Activated B cell treated with CpG ODN at 0.5 μM for 24 hours (primary cell): ENCODE measurements at regions of chr1 and their contacts with region 1.

Region 1: GRCh38 chr1:172818841-172819527 is 160.1 kb downstream of the FASLG start:
- DNase-seq: peak; percentile 45
- ATAC-seq: peak; percentile 84
- H3K4me3 Mint-ChIP-seq: peak overlapping the region; percentile 77
- H3K27ac Mint-ChIP-seq: peak overlapping the region; percentile 96
- H3K4me1 Mint-ChIP-seq: peaks cover 47% of the 10 kb centered on the region
- H3K27me3 Mint-ChIP-seq: no peaks in the 10 kb centered on the region
- CTCF ChIP-seq: no peak

Region 2: GRCh38 chr1:171781176-171781875 is 1037.7 kb before region 1 on chr1 and contains the start of gene METTL13:
- CTCF ChIA-PET with region 1: no interaction called
- POLR2A ChIA-PET with region 1: no interaction called
- intact Hi-C with region 1: loop called (anchors 5 kb)
- DNase-seq: peak; percentile 91
- ATAC-seq: peak; percentile 94
- H3K4me3 Mint-ChIP-seq: peak within 1 kb of the TSS; percentile 99
- H3K27ac Mint-ChIP-seq: peak within 1 kb of the TSS; percentile 94
- H3K4me1 Mint-ChIP-seq: peaks cover 43% of the 10 kb centered on the region
- H3K27me3 Mint-ChIP-seq: peaks cover 6% of the 10 kb centered on the region
- CTCF ChIP-seq: no peak
- total RNA-seq, gene METTL13: 33.6 and 35.7 TPM in 2 replicates

Region 3: GRCh38 chr1:172745014-172745413 is 74.0 kb before region 1 on chr1:
- CTCF ChIA-PET with region 1: interaction called, 33 read pairs
- POLR2A ChIA-PET with region 1: interaction called, 35 read pairs
- intact Hi-C with region 1: loop called (anchors 1 kb)
- DNase-seq: no peak
- ATAC-seq: peak; percentile 86
- H3K4me3 Mint-ChIP-seq: no peak overlapping the region
- H3K27ac Mint-ChIP-seq: peak overlapping the region; percentile 43
- H3K4me1 Mint-ChIP-seq: peaks cover 34% of the 10 kb centered on the region
- H3K27me3 Mint-ChIP-seq: peaks cover 4% of the 10 kb centered on the region
- CTCF ChIP-seq: peak; percentile 42

Region 4: DNA sequence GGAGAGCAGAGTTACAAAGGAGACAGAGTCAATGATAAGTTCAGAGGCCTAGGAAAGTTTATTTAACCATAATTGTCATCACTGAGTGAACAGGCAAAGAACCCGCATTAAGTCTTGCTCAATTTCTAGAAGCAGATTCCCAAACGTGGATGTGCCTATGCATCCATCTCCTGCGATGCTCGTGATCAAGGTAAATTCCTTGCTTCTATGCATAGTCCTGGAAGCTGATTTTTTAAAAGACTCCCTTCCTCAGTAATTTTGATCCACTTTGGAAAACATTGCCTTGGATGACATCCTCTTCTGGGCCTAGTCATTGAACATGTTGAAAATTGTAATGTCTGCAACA is 115.4 kb after region 1 on chr1:
- CTCF ChIA-PET with region 1: no interaction called
- POLR2A ChIA-PET with region 1: no interaction called
- intact Hi-C with region 1: loop called (anchors 1 kb)
- DNase-seq: no peak
- ATAC-seq: no peak
- H3K4me3 Mint-ChIP-seq: no peak overlapping the region
- H3K27ac Mint-ChIP-seq: no peak overlapping the region
- H3K4me1 Mint-ChIP-seq: peaks cover 20% of the 10 kb centered on the region
- H3K27me3 Mint-ChIP-seq: no peaks in the 10 kb centered on the region
- CTCF ChIP-seq: no peak

Region 5: DNA sequence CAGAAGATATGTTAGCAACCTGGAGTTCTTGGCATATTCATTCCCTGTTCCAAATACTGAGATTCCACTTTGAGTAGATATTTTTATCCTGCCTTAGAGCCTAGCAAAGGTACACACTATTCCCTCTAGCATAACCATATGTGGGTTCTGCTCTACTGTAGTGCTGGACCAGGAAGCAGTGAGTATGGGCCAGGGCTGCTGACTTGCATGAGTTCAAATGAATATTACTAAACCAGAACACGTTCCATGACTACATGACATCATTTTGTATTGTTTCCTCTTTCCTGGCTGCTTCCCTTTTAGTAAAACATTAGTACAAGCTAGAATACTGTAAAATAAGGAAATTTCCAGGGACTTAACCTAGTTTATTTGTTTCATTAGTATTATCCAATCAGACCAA is 190.6 kb after region 1 on chr1:
- CTCF ChIA-PET with region 1: no interaction called
- POLR2A ChIA-PET with region 1: no interaction called
- intact Hi-C with region 1: no loop called
- DNase-seq: no peak
- ATAC-seq: no peak
- H3K4me3 Mint-ChIP-seq: no peak overlapping the region
- H3K27ac Mint-ChIP-seq: no peak overlapping the region
- H3K4me1 Mint-ChIP-seq: no peaks in the 10 kb centered on the region
- H3K27me3 Mint-ChIP-seq: no peaks in the 10 kb centered on the region
- CTCF ChIP-seq: no peak

Region 6: GRCh38 chr1:173202430-173203145 is 383.6 kb after region 1 on chr1:
- CTCF ChIA-PET with region 1: interaction called, 20 read pairs
- POLR2A ChIA-PET with region 1: interaction called, 8 read pairs
- intact Hi-C with region 1: loop called (anchors 2 kb)
- DNase-seq: no peak
- ATAC-seq: no peak
- H3K4me3 Mint-ChIP-seq: no peak overlapping the region
- H3K27ac Mint-ChIP-seq: no peak overlapping the region
- H3K4me1 Mint-ChIP-seq: peaks cover 50% of the 10 kb centered on the region
- H3K27me3 Mint-ChIP-seq: no peaks in the 10 kb centered on the region
- CTCF ChIP-seq: no peak

Region 7: DNA sequence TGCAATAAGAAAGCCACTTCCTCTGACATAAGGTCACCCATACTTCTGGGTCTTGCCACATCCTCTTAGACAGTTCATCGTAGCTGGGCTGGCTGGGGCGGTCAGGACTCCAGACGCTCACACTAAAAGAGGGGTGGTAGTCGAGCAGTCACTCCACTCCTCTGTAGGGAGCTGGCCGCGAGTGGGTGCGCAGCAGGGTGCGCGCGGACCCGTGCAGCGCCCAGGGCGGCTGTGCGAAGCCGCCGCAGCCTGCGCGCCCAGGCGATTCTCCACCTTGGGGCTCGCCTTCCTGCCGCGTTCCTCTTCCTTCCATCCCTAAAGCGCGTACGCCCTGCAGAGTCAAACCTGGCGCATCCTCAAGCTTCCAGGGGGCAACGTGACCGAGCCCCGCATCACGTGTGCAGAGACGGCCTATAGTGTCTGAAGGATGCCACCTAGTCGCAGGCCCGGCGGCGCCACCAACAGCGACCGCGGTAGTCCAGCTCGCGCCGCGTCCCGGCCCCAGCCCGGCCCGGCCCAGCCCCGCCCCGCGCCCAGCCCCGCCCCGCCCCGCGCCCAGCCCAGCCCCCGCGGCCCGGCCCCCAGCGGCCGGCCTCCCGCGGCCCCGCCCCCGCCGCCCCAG is 657.8 kb after region 1 on chr1:
- CTCF ChIA-PET with region 1: no interaction called
- POLR2A ChIA-PET with region 1: interaction called, 15 read pairs
- intact Hi-C with region 1: loop called (anchors 1 kb)
- DNase-seq: peak; percentile 70
- ATAC-seq: peak; percentile 94
- H3K4me3 Mint-ChIP-seq: peak overlapping the region; percentile 92
- H3K27ac Mint-ChIP-seq: peak overlapping the region; percentile 95
- H3K4me1 Mint-ChIP-seq: peaks cover 40% of the 10 kb centered on the region
- H3K27me3 Mint-ChIP-seq: no peaks in the 10 kb centered on the region
- CTCF ChIP-seq: no peak

Region 8: DNA sequence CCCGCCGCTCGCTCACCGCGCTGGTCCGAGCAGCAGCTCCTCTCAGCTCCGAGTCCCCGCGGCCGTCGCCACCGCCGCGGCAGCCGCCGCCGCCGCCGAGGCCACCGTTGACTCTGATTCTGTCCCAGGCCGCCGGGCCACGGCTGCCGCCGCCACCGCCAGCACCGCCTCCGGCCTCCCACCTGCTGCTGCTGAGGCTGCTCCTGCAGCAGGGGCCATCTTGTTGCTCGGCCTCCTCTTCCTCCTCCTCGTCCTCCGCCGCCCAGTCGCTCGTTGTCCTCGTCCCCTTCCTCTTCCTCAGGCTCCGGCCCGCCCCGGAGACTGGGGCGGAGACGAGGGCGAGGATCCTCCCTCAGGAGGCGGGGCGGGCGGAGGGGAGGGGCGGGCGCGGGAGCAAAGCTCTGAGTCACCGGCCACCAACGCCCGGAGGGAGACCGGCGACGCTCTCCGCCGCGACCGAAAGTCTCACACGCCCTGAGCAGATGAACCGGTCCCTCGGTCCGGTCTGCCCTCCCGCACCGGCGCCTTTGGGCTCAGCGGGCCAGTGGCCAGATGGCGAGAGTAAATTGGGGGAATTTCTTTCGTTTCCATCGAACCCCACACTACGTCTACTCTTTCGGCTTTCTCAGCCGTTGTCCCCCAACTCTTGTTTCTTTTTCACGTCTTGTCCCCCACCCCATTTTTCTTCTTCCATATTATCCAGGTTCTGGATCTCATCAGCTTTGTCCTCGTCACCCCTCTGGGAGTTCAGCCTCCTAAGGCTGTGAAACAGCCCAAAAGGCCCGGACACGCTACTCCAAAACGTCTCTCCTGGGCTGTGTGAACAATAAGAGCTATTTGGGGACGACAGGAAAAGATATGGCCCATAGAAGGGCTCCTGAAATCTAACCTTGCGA is 1203.3 kb after region 1 on chr1 and contains the start of gene RC3H1:
- CTCF ChIA-PET with region 1: no interaction called
- POLR2A ChIA-PET with region 1: interaction called, 6 read pairs
- intact Hi-C with region 1: loop called (anchors 1 kb)
- DNase-seq: peak; percentile 88
- ATAC-seq: peak; percentile 93
- H3K4me3 Mint-ChIP-seq: peak within 1 kb of the TSS; percentile 97
- H3K27ac Mint-ChIP-seq: peak within 1 kb of the TSS; percentile 96
- H3K4me1 Mint-ChIP-seq: peaks cover 42% of the 10 kb centered on the region
- H3K27me3 Mint-ChIP-seq: no peaks in the 10 kb centered on the region
- CTCF ChIP-seq: no peak
- total RNA-seq, gene RC3H1: 45.6 and 55.6 TPM in 2 replicates